ENCODE measurements at regions of chr11 and their contacts with region 1.

Region 1: GRCh38 chr11:122108192-122108799 is 7.7 kb downstream of the BLID start:
- DNase-seq: no peak
- H3K4me3 ChIP-seq: no peak overlapping the region
- H3K27ac ChIP-seq: no peak overlapping the region
- H3K4me1 ChIP-seq: no peaks in the 10 kb centered on the region
- H3K27me3 ChIP-seq: no peaks in the 10 kb centered on the region
- CTCF ChIP-seq: peak in 3 of 4 experiments; percentile 13 to 46 (median 21)
- EP300 ChIP-seq: no peak
- POLR2A ChIP-seq: no peak

Region 2: GRCh38 chr11:121464352-121464946 is 643.8 kb before region 1 on chr11:
- intact Hi-C with region 1: loop called (anchors 10 kb)
- DNase-seq: peak; percentile 89
- H3K4me3 ChIP-seq: no peak overlapping the region
- H3K27ac ChIP-seq: peak overlapping the region; percentile 80 to 89 (median 84)
- H3K4me1 ChIP-seq: peaks cover 0 to 59% (median 55%) of the 10 kb centered on the region in 4 donors
- H3K27me3 ChIP-seq: no peaks in the 10 kb centered on the region
- CTCF ChIP-seq: no peak
- EP300 ChIP-seq: peak in 1 of 4 donors; percentile 22
- POLR2A ChIP-seq: no peak